ENCODE measurements at regions of chr10 and their contacts with region 1.

Region 1: GRCh38 chr10:88944813-88945212 is 7.8 kb downstream of the ACTA2 start:
- DNase-seq: no peak
- H3K4me3 ChIP-seq: no peak overlapping the region
- H3K27ac ChIP-seq: peak overlapping the region; percentile 41 to 82 (median 56)
- H3K4me1 ChIP-seq: peaks cover 0 to 34% (median 3%) of the 10 kb centered on the region in 4 donors
- H3K27me3 ChIP-seq: no peaks in the 10 kb centered on the region
- CTCF ChIP-seq: no peak
- EP300 ChIP-seq: no peak
- POLR2A ChIP-seq: no peak

Region 2: GRCh38 chr10:89217057-89217990 is 272.5 kb after region 1 on chr10:
- in situ Hi-C with region 1: loop called in 2 of 4 experiments (anchors 5 to 10 kb)
- intact Hi-C with region 1: no loop called
- DNase-seq: peak; percentile 55
- H3K4me3 ChIP-seq: no peak overlapping the region
- H3K27ac ChIP-seq: peak overlapping the region; percentile 39 to 59 (median 43)
- H3K4me1 ChIP-seq: peaks cover 0 to 13% (median 8%) of the 10 kb centered on the region in 4 donors
- H3K27me3 ChIP-seq: no peaks in the 10 kb centered on the region
- CTCF ChIP-seq: peak; percentile 72 to 83 (median 79)
- EP300 ChIP-seq: no peak
- POLR2A ChIP-seq: no peak

Region 3: GRCh38 chr10:89224739-89225443 is 280.1 kb after region 1 on chr10:
- in situ Hi-C with region 1: loop called in 1 of 4 experiments (anchors 10 kb)
- intact Hi-C with region 1: no loop called
- DNase-seq: no peak
- H3K4me3 ChIP-seq: no peak overlapping the region
- H3K27ac ChIP-seq: peak overlapping the region in 2 of 4 donors; percentile 11 to 25
- H3K4me1 ChIP-seq: peaks cover 0 to 3% (median 0%) of the 10 kb centered on the region in 4 donors
- H3K27me3 ChIP-seq: no peaks in the 10 kb centered on the region
- CTCF ChIP-seq: no peak
- EP300 ChIP-seq: no peak
- POLR2A ChIP-seq: no peak